ENCODE measurements at regions of chr17 and their contacts with region 1.

Region 1: DNA sequence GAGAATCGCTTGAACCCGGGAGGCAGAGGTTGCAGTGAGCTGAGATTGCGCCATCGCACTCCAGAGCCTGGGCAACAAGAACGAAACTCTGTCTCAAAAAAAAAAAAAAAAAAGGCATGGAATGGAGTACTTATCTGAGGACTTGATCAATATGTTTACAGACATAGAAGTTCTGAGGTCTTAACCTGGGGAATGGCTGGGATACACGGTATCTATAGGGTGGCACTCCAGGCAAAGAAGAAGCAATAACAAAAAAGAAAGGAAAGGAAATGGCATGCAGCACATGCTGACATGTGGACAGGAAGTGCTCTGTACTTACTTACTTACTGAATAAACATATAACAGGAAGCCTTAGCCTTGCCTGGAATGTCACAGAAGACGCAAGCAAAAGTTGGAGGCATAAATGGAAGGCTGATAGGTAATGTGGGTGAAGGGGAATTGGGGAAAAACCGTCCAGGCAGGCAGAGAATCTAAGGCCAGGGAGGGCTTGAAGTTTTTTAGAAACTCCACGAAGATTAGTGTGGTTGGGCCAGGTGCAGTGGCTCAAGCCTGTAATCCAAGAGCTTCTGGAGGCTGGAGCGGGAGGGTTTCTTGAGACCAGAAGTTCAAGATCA is 10.1 kb upstream of the SPOP start:
- DNase-seq: peak in 7 of 9 donors; percentile 44 to 67 (median 56)
- ATAC-seq: peak; percentile 85
- H3K4me3 ChIP-seq: peak overlapping the region; percentile 67
- H3K4me3 Mint-ChIP-seq: peak overlapping the region; percentile 86 to 100 (median 90)
- H3K27ac ChIP-seq: peak overlapping the region; percentile 80
- H3K27ac Mint-ChIP-seq: peak overlapping the region; percentile 95 to 99 (median 98)
- H3K4me1 ChIP-seq: peaks cover 21 to 43% of the 10 kb centered on the region in 2 donors
- H3K4me1 Mint-ChIP-seq: peaks cover 28 to 67% (median 53%) of the 10 kb centered on the region in 7 donors
- H3K27me3 ChIP-seq: no peaks in the 10 kb centered on the region
- H3K27me3 Mint-ChIP-seq: no peaks in the 10 kb centered on the region

Region 2: DNA sequence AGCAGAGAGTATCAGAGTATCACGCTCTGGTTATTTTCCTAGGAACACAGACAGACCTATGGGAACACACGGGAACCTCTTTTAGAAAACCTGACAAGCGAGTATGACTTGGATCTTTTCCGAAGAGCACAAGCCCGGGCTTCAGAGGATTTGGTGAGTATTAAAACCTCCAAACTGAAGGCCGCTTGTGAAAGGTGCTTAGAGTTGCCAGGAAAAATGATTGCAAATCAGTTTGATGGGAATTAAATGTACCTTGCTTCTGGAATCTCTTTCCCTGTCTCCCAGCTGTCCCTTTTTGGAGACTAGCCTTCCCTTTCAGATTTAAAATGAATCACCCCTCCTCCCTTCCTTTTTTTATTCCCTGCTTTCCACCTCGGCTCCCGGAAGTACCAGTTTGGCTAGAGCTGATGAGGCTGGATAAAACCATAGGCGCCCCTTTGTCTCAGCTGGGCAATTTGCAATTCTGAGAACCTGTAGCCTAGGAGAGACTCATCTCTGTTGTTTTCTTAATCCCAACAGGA is 127.8 kb after region 1 on chr17:
- CTCF ChIA-PET with region 1: no interaction called
- POLR2A ChIA-PET with region 1: interaction called, 10 read pairs
- intact Hi-C with region 1: no loop called
- DNase-seq: no peak
- ATAC-seq: no peak
- H3K4me3 ChIP-seq: no peak overlapping the region
- H3K4me3 Mint-ChIP-seq: peak overlapping the region in 5 of 10 donors; percentile 43 to 85 (median 67)
- H3K27ac ChIP-seq: peak overlapping the region; percentile 55
- H3K27ac Mint-ChIP-seq: peak overlapping the region; percentile 78 to 99 (median 96)
- H3K4me1 ChIP-seq: peaks cover 36 to 60% of the 10 kb centered on the region in 2 donors
- H3K4me1 Mint-ChIP-seq: peaks cover 32 to 79% (median 73%) of the 10 kb centered on the region in 7 donors
- H3K27me3 ChIP-seq: no peaks in the 10 kb centered on the region
- H3K27me3 Mint-ChIP-seq: no peaks in the 10 kb centered on the region